ENCODE measurements at regions of chr3 and their contacts with region 1.

Region 1: GRCh38 chr3:19065027-19065426 is 83.3 kb upstream of the KCNH8 start:
- DNase-seq: no peak
- ATAC-seq: no peak
- H3K4me3 ChIP-seq: no peak overlapping the region
- H3K27ac ChIP-seq: no peak overlapping the region
- H3K4me1 ChIP-seq: no peaks in the 10 kb centered on the region
- H3K27me3 ChIP-seq: no peaks in the 10 kb centered on the region
- CTCF ChIP-seq: peak in 3 of 5 experiments; percentile 4 to 16 (median 16)
- POLR2A ChIP-seq: no peak

Region 2: GRCh38 chr3:19866751-19867347 is 801.8 kb after region 1 on chr3:
- in situ Hi-C with region 1: loop called in 1 of 4 experiments (anchors 25 kb)
- intact Hi-C with region 1: no loop called
- DNase-seq: no peak
- ATAC-seq: peak; percentile 45 to 69
- H3K4me3 ChIP-seq: no peak overlapping the region
- H3K27ac ChIP-seq: no peak overlapping the region
- H3K4me1 ChIP-seq: no peaks in the 10 kb centered on the region
- H3K27me3 ChIP-seq: no peaks in the 10 kb centered on the region
- CTCF ChIP-seq: peak in 4 of 5 experiments; percentile 45 to 78 (median 63)
- POLR2A ChIP-seq: no peak

Measured in gastrocnemius medialis (tissue), 4 donors.